ENCODE measurements at regions of chr12 and their contacts with region 1.

Region 1: GRCh38 chr12:56189176-56189917 is at the start of gene SMARCC2:
- DNase-seq: peak; percentile 69 to 94 (median 84)
- ATAC-seq: peak; percentile 82
- H3K4me3 ChIP-seq: peak within 1 kb of the TSS; percentile 65 to 96
- H3K4me3 Mint-ChIP-seq: peak within 1 kb of the TSS; percentile 96
- H3K27ac ChIP-seq: peak within 1 kb of the TSS; percentile 66 to 82
- H3K27ac Mint-ChIP-seq: peak within 1 kb of the TSS; percentile 94
- H3K4me1 ChIP-seq: peaks cover 19% of the 10 kb centered on the region
- H3K4me1 Mint-ChIP-seq: peaks cover 43% of the 10 kb centered on the region
- H3K27me3 ChIP-seq: no peaks in the 10 kb centered on the region
- H3K27me3 Mint-ChIP-seq: no peaks in the 10 kb centered on the region
- CTCF ChIP-seq: peak; percentile 61
- total RNA-seq, gene SMARCC2: 109 to 113 TPM

Region 2: GRCh38 chr12:56127888-56128669 is 61.3 kb before region 1 on chr12 and contains the start of gene ESYT1:
- CTCF ChIA-PET with region 1: interaction called, 46 read pairs
- POLR2A ChIA-PET with region 1: interaction called, 67 read pairs
- intact Hi-C with region 1: loop called (anchors 1 kb)
- DNase-seq: peak; percentile 94 to 100 (median 96)
- ATAC-seq: peak; percentile 87
- H3K4me3 ChIP-seq: peak within 1 kb of the TSS; percentile 71 to 97
- H3K4me3 Mint-ChIP-seq: peak within 1 kb of the TSS; percentile 97
- H3K27ac ChIP-seq: peak within 1 kb of the TSS; percentile 79 to 86
- H3K27ac Mint-ChIP-seq: peak within 1 kb of the TSS; percentile 94
- H3K4me1 ChIP-seq: peaks cover 60% of the 10 kb centered on the region
- H3K4me1 Mint-ChIP-seq: peaks cover 64% of the 10 kb centered on the region
- H3K27me3 ChIP-seq: no peaks in the 10 kb centered on the region
- H3K27me3 Mint-ChIP-seq: no peaks in the 10 kb centered on the region
- CTCF ChIP-seq: no peak
- total RNA-seq, gene ESYT1: 82.4 to 83.0 TPM

Region 3: GRCh38 chr12:56178347-56178746 is 11.0 kb before region 1 on chr12:
- CTCF ChIA-PET with region 1: interaction called, 10 read pairs
- POLR2A ChIA-PET with region 1: interaction called, 6 read pairs
- intact Hi-C with region 1: no loop called
- DNase-seq: no peak
- ATAC-seq: no peak
- H3K4me3 ChIP-seq: no peak overlapping the region
- H3K4me3 Mint-ChIP-seq: no peak overlapping the region
- H3K27ac ChIP-seq: no peak overlapping the region
- H3K27ac Mint-ChIP-seq: no peak overlapping the region
- H3K4me1 ChIP-seq: no peaks in the 10 kb centered on the region
- H3K4me1 Mint-ChIP-seq: no peaks in the 10 kb centered on the region
- H3K27me3 ChIP-seq: no peaks in the 10 kb centered on the region
- H3K27me3 Mint-ChIP-seq: no peaks in the 10 kb centered on the region
- CTCF ChIP-seq: no peak

Region 4: DNA sequence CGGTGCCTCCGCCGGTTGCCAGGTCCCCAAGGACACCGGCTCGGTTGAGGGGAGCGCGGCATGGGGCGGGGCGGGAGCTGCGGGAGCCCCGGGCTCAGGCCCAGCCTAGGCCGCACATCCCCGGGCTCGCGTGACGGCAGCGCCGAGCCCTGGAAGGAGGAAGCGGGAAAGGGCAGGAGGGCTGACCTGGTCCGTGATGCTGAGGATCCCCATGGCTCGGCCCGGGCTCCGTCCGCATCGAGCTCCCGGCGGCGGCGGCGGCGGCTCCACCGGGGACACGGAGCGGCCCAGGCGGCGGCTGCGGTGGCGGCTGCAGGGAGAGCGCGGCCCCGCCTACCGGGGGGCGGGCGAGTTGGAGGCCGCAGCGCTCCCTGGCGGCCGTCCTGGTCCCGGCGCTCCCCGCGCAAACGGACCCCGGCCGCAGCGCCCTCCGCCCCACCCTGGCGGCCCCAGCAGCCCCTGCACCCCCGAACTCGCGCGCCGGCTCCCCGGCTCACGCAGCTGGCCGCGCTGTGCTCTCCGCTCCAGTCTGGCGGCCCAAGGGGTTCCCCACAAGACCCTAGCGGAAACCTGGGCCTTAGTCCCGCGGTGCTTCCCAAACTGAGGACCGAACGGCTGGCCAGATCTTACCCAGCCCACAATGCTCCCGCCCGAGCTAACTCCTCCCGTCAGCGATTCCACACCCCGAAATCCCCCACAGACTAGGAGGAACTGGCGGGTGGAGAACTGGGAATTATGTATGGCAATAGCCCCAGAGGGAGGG is 68.9 kb after region 1 on chr12 and contains the start of gene ANKRD52:
- CTCF ChIA-PET with region 1: interaction called, 19 read pairs
- POLR2A ChIA-PET with region 1: interaction called, 8 read pairs
- intact Hi-C with region 1: loop called (anchors 1 kb)
- DNase-seq: peak; percentile 61 to 92 (median 77)
- ATAC-seq: peak; percentile 95
- H3K4me3 ChIP-seq: peak within 1 kb of the TSS; percentile 79 to 99
- H3K4me3 Mint-ChIP-seq: peak within 1 kb of the TSS; percentile 94
- H3K27ac ChIP-seq: peak within 1 kb of the TSS; percentile 77
- H3K27ac Mint-ChIP-seq: peak within 1 kb of the TSS; percentile 88
- H3K4me1 ChIP-seq: peaks cover 21% of the 10 kb centered on the region
- H3K4me1 Mint-ChIP-seq: peaks cover 21% of the 10 kb centered on the region
- H3K27me3 ChIP-seq: no peaks in the 10 kb centered on the region
- H3K27me3 Mint-ChIP-seq: no peaks in the 10 kb centered on the region
- CTCF ChIP-seq: peak; percentile 64
- total RNA-seq, gene ANKRD52: 27.7 to 29.9 TPM

Region 5: DNA sequence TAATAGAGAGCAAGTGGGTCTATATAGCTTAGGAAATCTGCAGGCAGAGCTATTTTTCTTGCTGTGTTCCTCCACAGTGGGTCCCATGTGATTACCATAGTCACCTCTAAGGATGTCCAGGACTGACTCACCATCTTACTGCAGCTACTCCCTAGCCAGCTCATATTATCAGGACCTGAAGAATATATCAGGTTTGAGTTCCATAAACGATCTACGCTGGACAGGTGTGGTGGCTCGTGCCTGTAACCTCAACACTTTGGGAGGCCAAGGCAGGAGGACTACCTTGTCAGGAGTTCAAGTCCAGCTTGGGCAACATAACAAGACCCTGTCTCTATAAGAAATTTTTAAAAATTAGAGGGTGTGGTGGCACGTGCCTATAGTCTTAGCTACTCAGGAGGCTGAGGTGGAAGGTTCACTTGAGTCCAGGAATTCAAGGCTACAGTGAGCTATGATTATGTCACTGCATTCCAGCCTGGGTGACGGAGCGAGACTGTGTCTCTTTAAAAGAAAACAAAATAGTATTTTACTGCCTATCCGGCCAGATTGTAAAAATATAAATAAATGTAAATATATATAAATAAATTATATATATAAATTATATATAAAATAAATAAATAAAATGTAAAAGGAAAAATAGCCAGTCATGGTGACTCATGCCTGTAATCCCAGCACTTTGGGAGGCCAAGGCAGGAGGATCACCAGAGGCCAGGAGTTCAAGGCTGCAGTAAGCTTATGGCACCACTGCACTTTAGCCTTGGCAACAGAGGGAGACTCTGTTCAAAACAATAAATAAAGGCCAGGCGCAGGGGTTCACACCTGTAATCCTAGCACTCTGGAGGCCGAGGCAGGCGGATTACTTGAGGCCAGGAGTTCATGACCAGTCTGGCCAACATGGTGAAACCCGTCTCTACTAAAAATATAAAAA is 272.1 kb after region 1 on chr12:
- CTCF ChIA-PET with region 1: interaction called, 23 read pairs
- POLR2A ChIA-PET with region 1: interaction called, 5 read pairs
- intact Hi-C with region 1: loop called (anchors 1 kb)
- DNase-seq: no peak
- ATAC-seq: no peak
- H3K4me3 ChIP-seq: no peak overlapping the region
- H3K4me3 Mint-ChIP-seq: no peak overlapping the region
- H3K27ac ChIP-seq: no peak overlapping the region
- H3K27ac Mint-ChIP-seq: no peak overlapping the region
- H3K4me1 ChIP-seq: no peaks in the 10 kb centered on the region
- H3K4me1 Mint-ChIP-seq: peaks cover 4% of the 10 kb centered on the region
- H3K27me3 ChIP-seq: no peaks in the 10 kb centered on the region
- H3K27me3 Mint-ChIP-seq: no peaks in the 10 kb centered on the region
- CTCF ChIP-seq: no peak

Region 6: DNA sequence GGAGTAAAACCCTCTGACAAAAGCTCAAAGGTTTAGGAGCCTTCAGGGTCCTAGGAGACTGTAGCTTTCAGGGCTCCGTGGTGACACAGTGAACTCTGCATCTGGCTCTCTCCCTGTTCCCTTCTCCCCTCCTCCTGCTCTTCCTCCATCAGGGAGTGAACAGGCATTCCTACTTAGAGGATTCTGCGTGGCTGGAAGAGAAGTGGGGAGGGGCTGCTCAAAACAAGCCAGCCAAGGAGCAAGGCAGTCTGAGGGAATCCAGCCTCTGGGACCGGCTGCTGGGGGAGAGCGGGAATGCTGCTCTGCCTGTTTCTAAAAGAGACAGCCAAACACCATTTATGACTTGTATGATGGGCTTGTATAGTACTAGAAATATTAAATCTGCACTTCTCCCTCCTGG is 381.8 kb after region 1 on chr12:
- CTCF ChIA-PET with region 1: no interaction called
- POLR2A ChIA-PET with region 1: no interaction called
- intact Hi-C with region 1: loop called in 1 of 2 experiments (anchors 10 kb)
- DNase-seq: no peak
- ATAC-seq: no peak
- H3K4me3 ChIP-seq: no peak overlapping the region
- H3K4me3 Mint-ChIP-seq: no peak overlapping the region
- H3K27ac ChIP-seq: no peak overlapping the region
- H3K27ac Mint-ChIP-seq: no peak overlapping the region
- H3K4me1 ChIP-seq: peaks cover 16% of the 10 kb centered on the region
- H3K4me1 Mint-ChIP-seq: peaks cover 25% of the 10 kb centered on the region
- H3K27me3 ChIP-seq: no peaks in the 10 kb centered on the region
- H3K27me3 Mint-ChIP-seq: no peaks in the 10 kb centered on the region
- CTCF ChIP-seq: no peak

Measured in CD8-positive, alpha-beta T cell (primary cell).